Caco-2 (cell line): ENCODE measurements at regions of chr10 and their contacts with region 1.

Region 1: DNA sequence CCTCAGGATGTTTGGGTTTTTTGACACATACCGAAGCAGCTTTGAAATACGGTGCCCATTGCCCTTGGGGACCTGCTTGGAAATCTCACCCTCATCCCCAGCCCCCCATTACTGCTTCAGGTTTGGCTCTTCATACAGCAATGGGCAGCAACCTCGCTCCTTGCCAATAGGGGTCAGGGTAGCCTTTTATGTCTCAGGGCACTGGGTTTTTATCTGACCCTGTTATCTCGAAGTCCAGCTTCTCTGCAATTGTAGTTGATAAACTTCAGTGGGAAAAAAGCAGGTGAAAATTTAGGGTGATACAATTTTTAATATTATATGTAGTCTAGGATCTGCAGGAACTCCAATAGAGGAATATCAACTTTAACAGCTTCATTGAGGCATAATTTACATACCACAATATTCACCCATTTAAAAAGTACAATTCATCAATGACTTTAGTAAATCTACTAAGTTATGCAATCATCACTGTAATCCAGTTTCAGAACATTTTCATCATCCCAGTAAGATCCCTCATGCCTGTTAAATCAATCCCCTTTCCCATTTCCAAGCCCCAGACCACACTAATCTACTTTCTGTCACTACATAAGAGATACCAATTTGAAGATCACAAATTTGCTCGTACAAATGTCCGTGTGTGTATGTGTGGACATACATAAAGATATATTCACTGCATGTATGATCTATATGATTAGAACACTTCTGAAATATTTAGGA is 386.2 kb downstream of the KCNMA1 start:
- DNase-seq: peak; percentile 63 to 74
- H3K4me3 ChIP-seq: no peak overlapping the region
- H3K4me3 Mint-ChIP-seq: no peak overlapping the region
- H3K27ac Mint-ChIP-seq: no peak overlapping the region
- H3K4me1 ChIP-seq: peaks cover 53% of the 10 kb centered on the region
- H3K4me1 Mint-ChIP-seq: peaks cover 43% of the 10 kb centered on the region
- H3K27me3 ChIP-seq: no peaks in the 10 kb centered on the region
- H3K27me3 Mint-ChIP-seq: no peaks in the 10 kb centered on the region
- CTCF ChIP-seq: peak; percentile 88 to 89

Region 2: GRCh38 chr10:77072836-77073662 is 178.4 kb before region 1 on chr10:
- CTCF ChIA-PET with region 1: no interaction called
- POLR2A ChIA-PET with region 1: no interaction called
- intact Hi-C with region 1: no loop called
- DNase-seq: no peak
- H3K4me3 ChIP-seq: no peak overlapping the region
- H3K4me3 Mint-ChIP-seq: no peak overlapping the region
- H3K27ac Mint-ChIP-seq: no peak overlapping the region
- H3K4me1 ChIP-seq: no peaks in the 10 kb centered on the region
- H3K4me1 Mint-ChIP-seq: no peaks in the 10 kb centered on the region
- H3K27me3 ChIP-seq: no peaks in the 10 kb centered on the region
- H3K27me3 Mint-ChIP-seq: no peaks in the 10 kb centered on the region
- CTCF ChIP-seq: no peak

Region 3: GRCh38 chr10:77185696-77186095 is 65.8 kb before region 1 on chr10:
- CTCF ChIA-PET with region 1: interaction called, 3 read pairs
- POLR2A ChIA-PET with region 1: no interaction called
- intact Hi-C with region 1: loop called (anchors 1 kb)
- DNase-seq: peak; percentile 60 to 67
- H3K4me3 ChIP-seq: no peak overlapping the region
- H3K4me3 Mint-ChIP-seq: peak overlapping the region; percentile 42
- H3K27ac Mint-ChIP-seq: peak overlapping the region; percentile 78
- H3K4me1 ChIP-seq: peaks cover 39% of the 10 kb centered on the region
- H3K4me1 Mint-ChIP-seq: peaks cover 32% of the 10 kb centered on the region
- H3K27me3 ChIP-seq: no peaks in the 10 kb centered on the region
- H3K27me3 Mint-ChIP-seq: no peaks in the 10 kb centered on the region
- CTCF ChIP-seq: peak in 1 of 2 experiments; percentile 39

Region 4: GRCh38 chr10:77266242-77266641 is 14.8 kb after region 1 on chr10:
- CTCF ChIA-PET with region 1: no interaction called
- POLR2A ChIA-PET with region 1: no interaction called
- intact Hi-C with region 1: no loop called
- DNase-seq: no peak
- H3K4me3 ChIP-seq: no peak overlapping the region
- H3K4me3 Mint-ChIP-seq: no peak overlapping the region
- H3K27ac Mint-ChIP-seq: no peak overlapping the region
- H3K4me1 ChIP-seq: no peaks in the 10 kb centered on the region
- H3K4me1 Mint-ChIP-seq: no peaks in the 10 kb centered on the region
- H3K27me3 ChIP-seq: no peaks in the 10 kb centered on the region
- H3K27me3 Mint-ChIP-seq: no peaks in the 10 kb centered on the region
- CTCF ChIP-seq: no peak

Region 5: DNA sequence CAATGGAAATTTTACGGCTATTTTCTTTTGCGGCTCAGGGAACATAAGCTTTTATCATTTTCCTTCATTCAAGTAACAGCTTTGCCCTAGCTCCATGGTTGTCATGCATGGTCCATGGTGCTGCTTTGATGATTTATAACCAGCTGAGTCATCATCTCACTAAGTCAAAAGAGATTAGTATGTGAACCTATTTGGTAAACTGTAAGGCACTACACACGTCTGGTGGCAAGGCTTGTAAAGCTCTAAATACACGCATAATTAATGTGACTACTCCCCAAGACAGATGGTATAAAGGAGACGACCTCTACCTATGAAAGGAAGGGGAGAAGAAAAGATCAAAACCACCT is 45.9 kb after region 1 on chr10:
- CTCF ChIA-PET with region 1: interaction called, 4 read pairs
- POLR2A ChIA-PET with region 1: no interaction called
- intact Hi-C with region 1: loop called (anchors 2 kb)
- DNase-seq: no peak
- H3K4me3 ChIP-seq: no peak overlapping the region
- H3K4me3 Mint-ChIP-seq: no peak overlapping the region
- H3K27ac Mint-ChIP-seq: peak overlapping the region; percentile 45
- H3K4me1 ChIP-seq: peaks cover 50% of the 10 kb centered on the region
- H3K4me1 Mint-ChIP-seq: peaks cover 20% of the 10 kb centered on the region
- H3K27me3 ChIP-seq: no peaks in the 10 kb centered on the region
- H3K27me3 Mint-ChIP-seq: no peaks in the 10 kb centered on the region
- CTCF ChIP-seq: no peak

Region 6: DNA sequence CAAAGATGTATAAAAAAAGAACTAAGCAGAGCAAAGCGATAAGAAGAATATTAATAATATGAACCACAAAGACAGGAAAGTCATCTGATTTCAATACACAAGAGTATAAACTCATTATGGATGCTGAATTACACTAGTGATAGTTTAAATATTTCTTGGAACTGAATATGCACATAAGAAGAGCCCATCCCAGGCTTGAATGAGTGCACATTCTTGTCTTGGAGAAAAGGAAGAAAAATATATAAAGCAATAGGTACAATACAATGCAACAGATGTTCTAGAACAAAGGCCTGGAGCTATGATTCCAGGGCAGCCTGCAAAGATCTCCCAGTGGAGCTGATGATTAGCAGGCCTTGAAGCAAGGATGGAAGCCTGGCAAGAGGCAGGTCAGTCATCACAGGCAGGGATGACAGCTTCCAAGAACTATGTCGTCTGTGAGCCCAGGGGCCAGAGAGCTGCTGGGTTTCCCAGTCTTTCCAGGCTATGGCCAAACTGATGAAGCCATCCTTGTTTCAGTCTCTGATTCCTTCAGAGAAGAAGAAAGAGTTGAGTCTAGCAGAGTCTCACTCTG is 108.6 kb after region 1 on chr10:
- CTCF ChIA-PET with region 1: no interaction called
- POLR2A ChIA-PET with region 1: no interaction called
- intact Hi-C with region 1: no loop called
- DNase-seq: no peak
- H3K4me3 ChIP-seq: no peak overlapping the region
- H3K4me3 Mint-ChIP-seq: no peak overlapping the region
- H3K27ac Mint-ChIP-seq: no peak overlapping the region
- H3K4me1 ChIP-seq: no peaks in the 10 kb centered on the region
- H3K4me1 Mint-ChIP-seq: no peaks in the 10 kb centered on the region
- H3K27me3 ChIP-seq: no peaks in the 10 kb centered on the region
- H3K27me3 Mint-ChIP-seq: no peaks in the 10 kb centered on the region
- CTCF ChIP-seq: no peak

Region 7: GRCh38 chr10:77377678-77378352 is 126.4 kb after region 1 on chr10:
- CTCF ChIA-PET with region 1: interaction called, 5 read pairs
- POLR2A ChIA-PET with region 1: no interaction called
- intact Hi-C with region 1: loop called (anchors 2 kb)
- DNase-seq: peak; percentile 56 to 64
- H3K4me3 ChIP-seq: no peak overlapping the region
- H3K4me3 Mint-ChIP-seq: no peak overlapping the region
- H3K27ac Mint-ChIP-seq: peak overlapping the region; percentile 9
- H3K4me1 ChIP-seq: peaks cover 16% of the 10 kb centered on the region
- H3K4me1 Mint-ChIP-seq: no peaks in the 10 kb centered on the region
- H3K27me3 ChIP-seq: no peaks in the 10 kb centered on the region
- H3K27me3 Mint-ChIP-seq: no peaks in the 10 kb centered on the region
- CTCF ChIP-seq: peak; percentile 43 to 69

Region 8: DNA sequence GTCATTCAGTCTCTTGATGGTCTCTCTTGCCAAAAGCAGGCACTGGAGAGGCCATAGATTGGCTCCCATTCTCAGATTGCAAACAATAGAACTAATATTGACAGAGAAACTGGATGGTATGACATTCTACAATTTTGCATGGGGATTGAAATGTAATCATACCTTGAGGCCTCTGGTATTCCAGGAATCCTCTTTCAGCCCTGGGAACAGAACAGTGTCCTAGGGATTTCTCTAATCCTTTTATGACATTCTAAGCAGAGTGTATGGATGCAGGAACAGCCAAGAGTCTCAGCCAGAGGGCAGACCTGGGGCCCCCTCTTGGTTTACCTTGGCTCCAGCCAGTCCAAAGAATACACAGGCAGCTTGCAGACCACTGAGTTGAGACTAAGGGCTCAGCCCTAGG is 179.8 kb after region 1 on chr10:
- CTCF ChIA-PET with region 1: no interaction called
- POLR2A ChIA-PET with region 1: no interaction called
- intact Hi-C with region 1: loop called (anchors 1 kb)
- DNase-seq: peak; percentile 90 to 94
- H3K4me3 ChIP-seq: no peak overlapping the region
- H3K4me3 Mint-ChIP-seq: peak overlapping the region; percentile 47
- H3K27ac Mint-ChIP-seq: peak overlapping the region; percentile 92
- H3K4me1 ChIP-seq: peaks cover 62% of the 10 kb centered on the region
- H3K4me1 Mint-ChIP-seq: peaks cover 66% of the 10 kb centered on the region
- H3K27me3 ChIP-seq: no peaks in the 10 kb centered on the region
- H3K27me3 Mint-ChIP-seq: no peaks in the 10 kb centered on the region
- CTCF ChIP-seq: peak in 1 of 2 experiments; percentile 75

Region 9: GRCh38 chr10:77641788-77642397 is 390.4 kb after region 1 on chr10:
- CTCF ChIA-PET with region 1: interaction called, 5 read pairs
- POLR2A ChIA-PET with region 1: no interaction called
- intact Hi-C with region 1: loop called (anchors 1 kb)
- DNase-seq: peak in 1 of 2 experiments; percentile 76
- H3K4me3 ChIP-seq: no peak overlapping the region
- H3K4me3 Mint-ChIP-seq: no peak overlapping the region
- H3K27ac Mint-ChIP-seq: no peak overlapping the region
- H3K4me1 ChIP-seq: peaks cover 6% of the 10 kb centered on the region
- H3K4me1 Mint-ChIP-seq: peaks cover 7% of the 10 kb centered on the region
- H3K27me3 ChIP-seq: peaks cover 2% of the 10 kb centered on the region; the same call in 1 of the 2 replicates
- H3K27me3 Mint-ChIP-seq: peaks cover 3% of the 10 kb centered on the region
- CTCF ChIP-seq: peak; percentile 70 to 76